Prostate gland (tissue), 2 donors: ENCODE measurements at regions of chr16 and their contacts with region 1.

Region 1: GRCh38 chr16:88437373-88437964 is 15.6 kb upstream of the ZFPM1 start:
- DNase-seq: no peak
- H3K4me3 ChIP-seq: no peak overlapping the region
- H3K27ac ChIP-seq: no peak overlapping the region
- H3K4me1 ChIP-seq: no peaks in the 10 kb centered on the region
- H3K27me3 ChIP-seq: no peaks in the 10 kb centered on the region
- CTCF ChIP-seq: peak; percentile 90 to 93 (median 93)
- POLR2A ChIP-seq: no peak

Region 2: GRCh38 chr16:87982491-87983415 is 454.7 kb before region 1 on chr16:
- intact Hi-C with region 1: loop called (anchors 10 kb)
- DNase-seq: no peak
- H3K4me3 ChIP-seq: no peak overlapping the region
- H3K27ac ChIP-seq: no peak overlapping the region
- H3K4me1 ChIP-seq: no peaks in the 10 kb centered on the region
- H3K27me3 ChIP-seq: no peaks in the 10 kb centered on the region
- CTCF ChIP-seq: no peak
- POLR2A ChIP-seq: no peak

Region 3: DNA sequence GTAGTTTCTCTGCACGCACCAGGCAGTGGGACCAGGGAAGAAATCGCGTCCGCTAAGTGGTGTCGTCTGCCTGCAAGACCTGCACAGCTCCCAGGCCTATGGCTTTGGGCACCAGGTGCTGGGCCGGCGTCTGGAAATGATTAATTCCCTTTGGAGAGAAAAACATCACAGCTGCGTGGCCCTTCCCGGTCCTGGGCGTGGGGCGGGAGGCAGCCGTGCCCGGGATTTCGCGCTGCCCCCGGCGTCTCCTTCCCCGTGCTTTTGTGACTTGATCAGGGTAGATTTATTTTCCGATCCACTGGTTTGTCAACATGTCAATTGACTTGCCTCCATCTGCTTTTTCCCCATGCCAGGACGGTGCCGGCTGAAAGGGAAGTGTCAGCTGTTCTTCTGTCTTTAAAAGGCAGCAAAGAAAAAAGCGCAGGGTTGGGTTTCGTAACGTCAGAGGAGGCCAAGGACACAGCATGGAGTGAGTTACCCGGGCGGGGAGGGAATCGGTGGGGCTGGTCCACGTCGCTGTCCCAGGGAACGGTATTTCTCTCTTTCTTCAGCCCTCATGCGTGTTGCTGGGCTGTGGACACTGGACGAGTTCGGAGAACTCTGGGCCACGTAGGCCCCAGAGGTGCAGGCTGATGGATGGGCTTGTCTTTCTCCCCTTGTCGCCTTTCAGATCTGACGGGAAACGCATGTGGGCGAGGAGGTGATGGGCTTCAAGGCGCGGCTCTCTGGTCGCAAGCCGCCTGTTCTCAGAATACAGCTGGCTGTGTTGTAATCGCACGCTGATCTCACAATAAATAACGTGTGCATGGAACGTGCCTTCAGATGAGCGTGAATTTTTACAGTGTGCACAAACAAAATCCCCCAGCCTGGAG is 242.8 kb before region 1 on chr16:
- intact Hi-C with region 1: loop called (anchors 2 kb)
- DNase-seq: no peak
- H3K4me3 ChIP-seq: no peak overlapping the region
- H3K27ac ChIP-seq: no peak overlapping the region
- H3K4me1 ChIP-seq: no peaks in the 10 kb centered on the region
- H3K27me3 ChIP-seq: no peaks in the 10 kb centered on the region
- CTCF ChIP-seq: peak in 1 of 4 experiments; percentile 2
- POLR2A ChIP-seq: no peak

Region 4: GRCh38 chr16:88287219-88287618 is 150.2 kb before region 1 on chr16:
- intact Hi-C with region 1: loop called (anchors 10 kb)
- DNase-seq: no peak
- H3K4me3 ChIP-seq: no peak overlapping the region
- H3K27ac ChIP-seq: no peak overlapping the region
- H3K4me1 ChIP-seq: no peaks in the 10 kb centered on the region
- H3K27me3 ChIP-seq: no peaks in the 10 kb centered on the region
- CTCF ChIP-seq: peak in 3 of 4 experiments; percentile 35 to 64 (median 40)
- POLR2A ChIP-seq: no peak